ENCODE measurements at regions of chr4 and their contacts with region 1.

Region 1: GRCh38 chr4:72312032-72312650 is 256.9 kb downstream of the ADAMTS3 start:
- DNase-seq: peak; percentile 84 to 85
- ATAC-seq: peak; percentile 93
- H3K4me3 ChIP-seq: no peak overlapping the region
- H3K27ac ChIP-seq: peak overlapping the region in 1 of 2 donors; percentile 88
- H3K4me1 ChIP-seq: peaks cover 3 to 7% of the 10 kb centered on the region in 2 donors
- H3K27me3 ChIP-seq: no peaks in the 10 kb centered on the region

Region 2: GRCh38 chr4:72375073-72375736 is 63.1 kb after region 1 on chr4:
- intact Hi-C with region 1: loop called in 1 of 2 experiments (anchors 5 kb)
- DNase-seq: no peak
- ATAC-seq: no peak
- H3K4me3 ChIP-seq: no peak overlapping the region
- H3K27ac ChIP-seq: no peak overlapping the region
- H3K4me1 ChIP-seq: peaks cover 3 to 4% of the 10 kb centered on the region in 2 donors
- H3K27me3 ChIP-seq: no peaks in the 10 kb centered on the region

Region 3: DNA sequence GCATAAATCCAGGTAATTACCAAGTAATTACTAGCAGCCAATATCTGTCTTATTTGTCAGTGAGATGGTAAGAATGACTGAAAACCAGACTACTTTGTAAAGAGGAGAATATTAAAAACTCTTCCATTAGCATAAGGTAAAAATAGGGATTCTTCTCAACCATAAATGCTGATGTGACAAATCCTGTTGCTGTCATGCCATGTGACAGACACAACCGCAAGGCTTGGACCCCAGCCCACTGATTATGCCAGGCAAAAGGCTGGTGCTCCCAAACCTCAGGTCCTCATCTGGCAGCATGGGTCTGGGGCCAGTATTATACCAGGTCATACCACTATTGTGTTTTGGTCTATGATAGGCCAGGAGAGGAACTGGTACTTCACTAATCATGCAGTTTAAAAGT is 75.8 kb after region 1 on chr4:
- intact Hi-C with region 1: no loop called
- DNase-seq: no peak
- ATAC-seq: no peak
- H3K4me3 ChIP-seq: no peak overlapping the region
- H3K27ac ChIP-seq: no peak overlapping the region
- H3K4me1 ChIP-seq: peaks cover 0 to 2% of the 10 kb centered on the region in 2 donors
- H3K27me3 ChIP-seq: no peaks in the 10 kb centered on the region

Region 4: GRCh38 chr4:72451349-72451748 is 139.2 kb after region 1 on chr4:
- intact Hi-C with region 1: loop called in 1 of 2 experiments (anchors 5 kb)
- DNase-seq: peak in 1 of 2 donors; percentile 43
- ATAC-seq: no peak
- H3K4me3 ChIP-seq: no peak overlapping the region
- H3K27ac ChIP-seq: no peak overlapping the region
- H3K4me1 ChIP-seq: peaks cover 1 to 3% of the 10 kb centered on the region in 2 donors
- H3K27me3 ChIP-seq: no peaks in the 10 kb centered on the region

Region 5: DNA sequence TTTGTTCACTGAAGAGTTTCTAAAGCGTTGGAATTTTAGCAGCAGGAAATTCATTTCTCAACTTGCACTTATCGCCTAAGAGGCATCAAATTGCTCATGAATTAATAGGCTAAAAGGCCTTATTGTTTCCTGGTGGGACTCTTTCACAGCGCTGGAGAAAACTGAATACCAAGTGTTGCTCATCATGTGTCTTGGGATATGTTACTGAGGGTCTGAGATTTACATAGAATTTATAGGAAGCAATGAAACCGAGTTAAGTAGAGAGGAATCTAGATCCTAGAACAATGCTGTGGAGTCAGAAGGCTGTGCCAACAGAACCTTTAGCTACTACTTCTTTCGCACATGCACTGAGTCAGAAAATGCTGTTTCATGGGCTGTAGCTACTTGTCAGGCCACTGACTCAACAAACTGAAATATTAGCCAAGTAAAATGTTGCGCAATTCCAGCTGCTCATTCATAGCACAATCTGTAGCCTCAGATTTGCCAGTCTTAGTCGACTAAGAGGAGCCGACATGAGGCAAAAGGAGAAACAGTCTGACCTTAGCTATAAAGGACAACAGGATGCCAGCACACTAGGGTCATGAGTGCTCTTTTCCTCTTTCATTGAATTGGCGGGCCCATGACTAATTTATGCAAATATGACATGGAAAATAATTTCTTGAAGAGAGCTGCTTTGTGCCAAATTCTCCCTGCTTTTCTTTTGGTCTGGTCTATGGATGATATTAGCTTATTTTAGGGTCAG is 1392.3 kb after region 1 on chr4:
- intact Hi-C with region 1: loop called in 1 of 2 experiments (anchors 10 kb)
- DNase-seq: peak in 1 of 2 donors; percentile 72
- ATAC-seq: peak; percentile 96
- H3K4me3 ChIP-seq: no peak overlapping the region
- H3K27ac ChIP-seq: peak overlapping the region; percentile 23 to 59
- H3K4me1 ChIP-seq: peaks cover 4 to 9% of the 10 kb centered on the region in 2 donors
- H3K27me3 ChIP-seq: no peaks in the 10 kb centered on the region

Measured in aorta (tissue), 5 donors.